ENCODE measurements at regions of chr1 and their contacts with region 1.

Region 1: DNA sequence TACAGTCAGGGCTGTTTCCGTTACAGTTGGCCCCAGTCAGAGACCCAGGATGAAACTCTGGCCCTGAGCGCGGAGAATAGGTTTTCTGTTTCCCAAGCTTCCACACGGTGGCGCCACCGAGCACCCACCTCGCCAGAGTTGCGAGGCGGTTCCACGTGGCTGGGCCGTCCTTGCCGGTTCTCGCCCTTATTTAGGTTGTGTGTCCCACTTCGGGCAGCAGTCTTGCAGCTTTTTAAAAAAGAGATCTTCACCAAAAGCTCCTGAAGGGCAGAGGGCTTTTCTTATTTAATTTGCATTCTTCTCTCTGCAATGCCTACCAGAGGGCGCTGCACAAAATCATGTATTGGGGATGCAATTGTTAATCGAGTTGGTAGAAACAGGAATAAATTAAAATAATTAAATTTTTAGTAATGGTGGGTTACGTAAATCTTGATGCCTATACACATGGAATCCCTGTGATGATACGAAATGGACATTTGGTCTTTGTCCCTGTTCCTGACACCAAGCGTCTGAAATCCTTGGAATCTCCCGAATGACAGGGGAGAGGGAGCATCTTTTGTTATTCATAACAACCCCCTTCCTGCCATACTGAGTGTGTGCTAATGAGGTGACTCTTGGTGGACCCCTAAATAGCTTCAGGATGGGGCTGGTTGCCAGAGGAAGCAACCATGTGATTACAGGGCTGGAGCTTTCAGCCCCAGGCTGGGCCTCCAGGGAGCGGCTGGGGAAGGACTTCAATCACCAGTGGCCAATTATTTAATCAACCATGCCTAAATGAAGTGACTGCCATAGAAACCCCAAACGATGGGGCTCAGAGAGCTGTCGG is 5.6 kb upstream of the S100A7 start:
- DNase-seq: peak; percentile 39
- H3K4me3 ChIP-seq: no peak overlapping the region
- H3K27ac ChIP-seq: no peak overlapping the region
- H3K4me1 ChIP-seq: peaks cover 13% of the 10 kb centered on the region
- H3K27me3 ChIP-seq: peaks cover 3% of the 10 kb centered on the region
- CTCF ChIP-seq: peak; percentile 76 to 78

Region 2: DNA sequence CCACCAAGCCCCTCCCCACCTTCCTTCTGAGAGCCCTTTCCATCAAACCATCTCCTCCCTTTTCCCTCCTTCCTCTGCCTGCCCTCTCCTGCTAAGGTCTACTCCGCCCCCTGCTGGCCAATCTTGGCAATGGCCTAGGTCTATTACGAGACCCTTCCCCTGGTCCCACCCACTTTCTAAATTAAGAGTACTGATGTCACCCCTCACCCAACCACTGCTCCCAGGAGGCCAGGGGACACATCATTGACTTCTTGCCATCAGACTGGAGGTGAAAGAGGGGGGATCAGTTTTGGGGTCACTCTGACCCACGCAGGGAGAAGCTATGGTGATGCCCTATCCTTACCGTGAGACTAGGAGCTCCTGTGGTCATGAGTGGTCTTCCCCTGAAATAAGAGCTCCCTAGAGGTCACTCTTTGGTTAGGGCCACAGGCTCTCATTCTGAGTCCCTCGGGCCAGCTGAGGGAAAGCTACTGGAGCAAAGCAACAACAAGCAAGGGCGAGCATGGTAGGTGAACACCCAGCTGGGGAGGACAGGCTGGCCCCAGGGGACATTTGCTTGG is 29.0 kb after region 1 on chr1:
- CTCF ChIA-PET with region 1: interaction called, 3 read pairs
- dilution Hi-C with region 1: loop called (anchors 5 kb)
- in situ Hi-C with region 1: no loop called
- intact Hi-C with region 1: loop called (anchors 1 kb)
- DNase-seq: no peak
- H3K4me3 ChIP-seq: no peak overlapping the region
- H3K27ac ChIP-seq: no peak overlapping the region
- H3K4me1 ChIP-seq: peaks cover 36% of the 10 kb centered on the region
- H3K27me3 ChIP-seq: no peaks in the 10 kb centered on the region
- CTCF ChIP-seq: peak; percentile 65 to 90

Region 3: GRCh38 chr1:153545067-153546055 is 79.3 kb after region 1 on chr1 and contains the start of gene S100A4:
- CTCF ChIA-PET with region 1: no interaction called
- dilution Hi-C with region 1: no loop called
- in situ Hi-C with region 1: no loop called
- intact Hi-C with region 1: no loop called
- DNase-seq: peak; percentile 92
- H3K4me3 ChIP-seq: no peak within 1 kb of the TSS
- H3K27ac ChIP-seq: peak within 1 kb of the TSS; percentile 53
- H3K4me1 ChIP-seq: peaks cover 70% of the 10 kb centered on the region
- H3K27me3 ChIP-seq: no peaks in the 10 kb centered on the region
- CTCF ChIP-seq: no peak
- total RNA-seq, gene S100A4: 4.3 to 9.9 TPM

Region 4: GRCh38 chr1:153566440-153567379 is 100.7 kb after region 1 on chr1:
- CTCF ChIA-PET with region 1: no interaction called
- dilution Hi-C with region 1: loop called (anchors 5 kb)
- in situ Hi-C with region 1: no loop called
- intact Hi-C with region 1: no loop called
- DNase-seq: peak; percentile 99
- H3K4me3 ChIP-seq: peak overlapping the region in 2 of 3 experiments; percentile 61 to 98
- H3K27ac ChIP-seq: peak overlapping the region; percentile 100
- H3K4me1 ChIP-seq: peaks cover 40% of the 10 kb centered on the region
- H3K27me3 ChIP-seq: no peaks in the 10 kb centered on the region
- CTCF ChIP-seq: no peak

Measured in mammary epithelial cell (primary cell).